Activated naive CD4-positive, alpha-beta T cell treated with anti-CD3 and anti-CD28 coated beads for 36 hours (primary cell): ENCODE measurements at regions of chr20 and their contacts with region 1.

Region 1: DNA sequence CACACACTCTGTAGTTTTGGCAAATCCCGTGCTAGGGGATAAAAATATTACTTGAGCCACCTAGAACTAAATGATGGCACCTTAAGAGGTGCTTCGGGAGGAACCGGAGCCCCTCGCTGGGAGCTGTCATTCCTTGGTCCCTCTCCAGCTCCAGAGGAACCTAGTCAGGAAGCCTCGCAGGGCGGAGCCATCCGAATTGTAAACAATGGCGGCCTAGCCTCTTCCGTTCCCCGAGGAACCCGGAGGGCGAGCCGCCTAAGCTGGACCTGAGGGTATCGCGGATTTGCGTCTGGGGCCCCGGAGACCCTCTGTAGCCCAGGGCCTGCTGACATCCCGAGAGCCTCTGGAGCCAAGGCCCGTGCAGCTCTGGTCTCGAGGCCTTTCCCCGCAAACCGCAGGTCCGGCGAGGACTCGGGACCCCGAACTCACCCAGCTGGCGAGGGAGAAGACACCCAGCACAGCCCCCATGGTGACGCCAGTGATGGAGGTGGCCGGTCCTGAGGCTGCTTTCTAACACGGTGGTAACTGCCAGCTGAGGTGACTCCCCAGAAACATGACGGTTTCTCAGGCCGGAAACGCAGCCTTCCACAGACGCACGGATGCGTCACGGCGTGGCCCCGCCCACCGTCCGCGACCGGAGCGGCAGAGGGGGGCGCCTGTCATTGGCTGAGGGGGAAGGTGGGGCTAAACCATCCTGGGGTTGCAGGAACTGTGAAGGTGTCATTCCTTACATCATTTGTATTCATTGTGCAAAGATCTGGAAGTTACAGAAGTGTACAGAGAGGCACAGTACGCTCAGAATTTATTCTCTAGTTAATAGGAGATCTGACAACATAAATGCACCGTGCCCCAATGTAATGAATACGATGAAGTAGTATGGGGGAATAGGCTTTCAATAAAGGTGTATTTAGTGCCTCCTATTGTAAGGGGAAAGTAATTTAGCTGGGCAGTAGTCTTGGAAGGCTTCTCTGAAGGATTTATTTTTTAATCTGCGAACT is at the start of gene SERINC3:
- DNase-seq: peak; percentile 99
- H3K4me3 Mint-ChIP-seq: peak within 1 kb of the TSS; percentile 82
- H3K27ac Mint-ChIP-seq: peak within 1 kb of the TSS; percentile 94
- H3K4me1 Mint-ChIP-seq: peaks cover 47% of the 10 kb centered on the region
- H3K27me3 Mint-ChIP-seq: no peaks in the 10 kb centered on the region
- total RNA-seq, gene SERINC3: 48.7 to 50.2 TPM

Region 2: GRCh38 chr20:44388466-44389023 is 133.2 kb before region 1 on chr20:
- CTCF ChIA-PET with region 1: no interaction called
- intact Hi-C with region 1: loop called (anchors 5 kb)
- DNase-seq: peak; percentile 90
- H3K4me3 Mint-ChIP-seq: peak overlapping the region; percentile 22
- H3K27ac Mint-ChIP-seq: no peak overlapping the region
- H3K4me1 Mint-ChIP-seq: peaks cover 11% of the 10 kb centered on the region
- H3K27me3 Mint-ChIP-seq: peaks cover 3% of the 10 kb centered on the region

Region 3: GRCh38 chr20:44495802-44496481 is 25.8 kb before region 1 on chr20:
- CTCF ChIA-PET with region 1: no interaction called
- intact Hi-C with region 1: loop called (anchors 1 kb)
- DNase-seq: peak; percentile 31
- H3K4me3 Mint-ChIP-seq: no peak overlapping the region
- H3K27ac Mint-ChIP-seq: peak overlapping the region; percentile 82
- H3K4me1 Mint-ChIP-seq: peaks cover 39% of the 10 kb centered on the region
- H3K27me3 Mint-ChIP-seq: no peaks in the 10 kb centered on the region

Region 4: GRCh38 chr20:44885392-44886265 is 363.8 kb after region 1 on chr20 and contains the start of gene YWHAB:
- CTCF ChIA-PET with region 1: no interaction called
- intact Hi-C with region 1: loop called (anchors 1 kb)
- DNase-seq: peak; percentile 99
- H3K4me3 Mint-ChIP-seq: peak within 1 kb of the TSS; percentile 95
- H3K27ac Mint-ChIP-seq: peak within 1 kb of the TSS; percentile 96
- H3K4me1 Mint-ChIP-seq: peaks cover 59% of the 10 kb centered on the region
- H3K27me3 Mint-ChIP-seq: no peaks in the 10 kb centered on the region
- total RNA-seq, gene YWHAB: 245 to 260 TPM